ENCODE measurements at regions of chr13 and their contacts with region 1.

Region 1: DNA sequence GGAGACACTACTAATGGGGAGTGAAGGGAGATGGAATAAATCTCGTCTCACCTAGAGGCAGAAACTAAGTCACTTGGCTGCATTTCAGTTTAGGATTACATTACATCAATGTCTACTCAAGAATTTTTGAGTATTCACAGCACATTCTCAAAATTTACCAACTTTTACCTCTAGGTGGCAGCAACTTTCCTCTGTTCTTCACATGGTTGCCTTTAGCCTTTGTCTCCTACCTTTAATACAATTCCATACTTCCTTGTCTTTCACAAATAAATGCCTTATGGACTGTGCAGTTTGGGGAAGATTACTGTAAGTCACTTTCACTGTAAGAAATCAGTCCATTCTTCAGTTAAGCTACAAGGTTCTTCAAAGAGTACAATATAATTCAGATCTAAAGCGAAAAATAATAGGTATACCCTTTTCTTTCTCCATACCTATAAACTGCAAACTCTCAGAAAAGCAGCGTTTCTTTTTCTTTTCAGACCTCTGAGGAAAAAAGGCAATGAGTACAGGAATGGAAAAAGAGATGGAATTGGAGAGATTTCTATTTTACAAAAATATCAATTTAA is 379.4 kb downstream of the KLF12 start:
- DNase-seq: peak; percentile 10
- ATAC-seq: peak; percentile 47
- H3K4me3 Mint-ChIP-seq: no peak overlapping the region
- H3K27ac Mint-ChIP-seq: no peak overlapping the region
- H3K4me1 Mint-ChIP-seq: peaks cover 28% of the 10 kb centered on the region
- H3K27me3 Mint-ChIP-seq: no peaks in the 10 kb centered on the region

Region 2: GRCh38 chr13:72514146-72514545 is 1240.7 kb before region 1 on chr13:
- CTCF ChIA-PET with region 1: no interaction called
- POLR2A ChIA-PET with region 1: no interaction called
- intact Hi-C with region 1: no loop called
- DNase-seq: no peak
- ATAC-seq: no peak
- H3K4me3 Mint-ChIP-seq: no peak overlapping the region
- H3K27ac Mint-ChIP-seq: no peak overlapping the region
- H3K4me1 Mint-ChIP-seq: no peaks in the 10 kb centered on the region
- H3K27me3 Mint-ChIP-seq: peaks cover 5% of the 10 kb centered on the region

Region 3: DNA sequence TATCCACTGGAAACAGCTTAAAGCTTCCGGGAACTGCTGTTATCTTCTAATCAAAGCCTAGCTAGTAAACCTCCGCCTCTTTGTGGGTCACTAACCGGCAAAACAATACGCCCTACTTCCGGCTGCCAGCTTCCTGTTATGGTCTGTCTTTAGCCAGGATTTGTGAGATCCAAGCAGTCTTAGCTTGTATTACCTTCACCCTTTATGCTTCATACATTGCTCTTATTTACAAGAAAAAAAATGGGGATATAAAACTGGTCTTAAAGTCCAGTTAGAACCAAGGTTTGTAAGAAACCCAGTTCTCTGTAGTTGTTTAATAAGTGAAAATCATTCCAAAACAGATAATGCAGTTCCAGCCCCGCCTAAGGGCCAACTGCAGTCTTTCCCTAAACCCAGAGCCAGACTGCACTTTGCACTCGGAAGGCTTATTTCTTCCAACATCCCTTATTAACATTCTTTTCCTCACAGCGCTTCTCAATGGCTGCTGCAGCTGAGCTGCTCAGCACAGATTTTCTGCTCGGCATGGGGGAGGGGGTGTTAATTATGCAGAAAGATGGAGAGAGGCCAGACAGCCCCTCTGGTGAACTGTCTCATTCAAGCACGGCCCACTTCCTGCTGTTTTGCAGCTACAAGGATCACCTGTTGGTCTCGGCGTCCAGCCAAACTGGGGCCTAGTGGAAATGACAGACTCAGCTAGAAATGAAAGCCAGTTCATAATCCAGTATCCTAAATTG is 11.0 kb after region 1 on chr13:
- CTCF ChIA-PET with region 1: interaction called, 19 read pairs
- POLR2A ChIA-PET with region 1: no interaction called
- intact Hi-C with region 1: no loop called
- DNase-seq: peak; percentile 87
- ATAC-seq: peak; percentile 90
- H3K4me3 Mint-ChIP-seq: peak overlapping the region; percentile 68
- H3K27ac Mint-ChIP-seq: peak overlapping the region; percentile 94
- H3K4me1 Mint-ChIP-seq: peaks cover 68% of the 10 kb centered on the region
- H3K27me3 Mint-ChIP-seq: no peaks in the 10 kb centered on the region

Region 4: GRCh38 chr13:73924607-73925006 is 169.8 kb after region 1 on chr13:
- CTCF ChIA-PET with region 1: no interaction called
- POLR2A ChIA-PET with region 1: no interaction called
- intact Hi-C with region 1: loop called in 1 of 2 experiments (anchors 5 kb)
- DNase-seq: no peak
- ATAC-seq: peak; percentile 72
- H3K4me3 Mint-ChIP-seq: no peak overlapping the region
- H3K27ac Mint-ChIP-seq: peak overlapping the region; percentile 86
- H3K4me1 Mint-ChIP-seq: peaks cover 76% of the 10 kb centered on the region
- H3K27me3 Mint-ChIP-seq: no peaks in the 10 kb centered on the region

Region 5: GRCh38 chr13:73998631-73999030 is 243.8 kb after region 1 on chr13:
- CTCF ChIA-PET with region 1: no interaction called
- POLR2A ChIA-PET with region 1: no interaction called
- intact Hi-C with region 1: loop called in 1 of 2 experiments (anchors 5 kb)
- DNase-seq: no peak
- ATAC-seq: peak; percentile 95
- H3K4me3 Mint-ChIP-seq: no peak overlapping the region
- H3K27ac Mint-ChIP-seq: peak overlapping the region; percentile 55
- H3K4me1 Mint-ChIP-seq: peaks cover 49% of the 10 kb centered on the region
- H3K27me3 Mint-ChIP-seq: no peaks in the 10 kb centered on the region

Measured in activated CD4-positive, alpha-beta T cell treated with anti-CD3 and anti-CD28 coated beads for 36 hours (primary cell).